ENCODE measurements at regions of chr15 and their contacts with region 1.

Region 1: GRCh38 chr15:28114721-28115622 is 15.9 kb upstream of the OCA2 start:
- DNase-seq: no peak
- ATAC-seq: no peak
- H3K4me3 ChIP-seq: no peak overlapping the region
- H3K27ac ChIP-seq: no peak overlapping the region
- H3K4me1 ChIP-seq: no peaks in the 10 kb centered on the region
- H3K27me3 ChIP-seq: no peaks in the 10 kb centered on the region
- CTCF ChIP-seq: no peak
- EP300 ChIP-seq: no peak
- POLR2A ChIP-seq: no peak
- RAD21 ChIP-seq: no peak

Region 2: GRCh38 chr15:27328608-27329007 is 786.4 kb before region 1 on chr15:
- CTCF ChIA-PET with region 1: no interaction called
- POLR2A ChIA-PET with region 1: no interaction called
- RAD21 ChIA-PET with region 1: no interaction called
- SMC1A ChIA-PET with region 1: no interaction called
- in situ Hi-C with region 1: no loop called
- intact Hi-C with region 1: no loop called
- DNase-seq: no peak
- ATAC-seq: no peak
- H3K4me3 ChIP-seq: no peak overlapping the region
- H3K27ac ChIP-seq: no peak overlapping the region
- H3K4me1 ChIP-seq: no peaks in the 10 kb centered on the region
- H3K27me3 ChIP-seq: no peaks in the 10 kb centered on the region
- CTCF ChIP-seq: no peak
- EP300 ChIP-seq: no peak
- POLR2A ChIP-seq: no peak
- RAD21 ChIP-seq: no peak

Region 3: DNA sequence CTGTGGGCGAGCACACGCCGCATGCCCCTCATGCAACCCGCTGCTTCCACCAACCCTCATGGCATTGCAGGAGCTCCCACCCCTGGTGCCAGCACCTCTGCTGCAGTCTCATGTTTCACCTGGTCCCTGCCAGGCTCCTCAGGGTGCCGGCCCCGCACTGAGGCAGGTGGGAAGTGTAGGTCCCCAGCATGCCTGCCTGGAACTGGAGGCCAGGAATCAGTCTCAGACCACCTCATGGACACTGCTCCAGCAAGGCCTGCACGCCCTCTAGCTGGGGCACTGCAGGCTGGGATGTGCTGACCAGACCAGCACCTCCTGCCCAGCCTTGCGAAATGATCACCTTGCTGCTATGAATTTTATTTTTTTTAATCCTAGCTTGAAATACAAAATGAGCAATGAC is 55.0 kb before region 1 on chr15:
- CTCF ChIA-PET with region 1: no interaction called
- POLR2A ChIA-PET with region 1: no interaction called
- RAD21 ChIA-PET with region 1: no interaction called
- SMC1A ChIA-PET with region 1: no interaction called
- in situ Hi-C with region 1: no loop called
- intact Hi-C with region 1: no loop called
- DNase-seq: no peak
- ATAC-seq: no peak
- H3K4me3 ChIP-seq: no peak overlapping the region
- H3K27ac ChIP-seq: no peak overlapping the region
- H3K4me1 ChIP-seq: no peaks in the 10 kb centered on the region
- H3K27me3 ChIP-seq: no peaks in the 10 kb centered on the region
- CTCF ChIP-seq: no peak
- EP300 ChIP-seq: no peak
- POLR2A ChIP-seq: no peak
- RAD21 ChIP-seq: no peak

Region 4: GRCh38 chr15:28080386-28080785 is 34.6 kb before region 1 on chr15:
- CTCF ChIA-PET with region 1: interaction called, 3 read pairs
- POLR2A ChIA-PET with region 1: no interaction called
- RAD21 ChIA-PET with region 1: no interaction called
- SMC1A ChIA-PET with region 1: no interaction called
- in situ Hi-C with region 1: loop called (anchors 5 kb)
- intact Hi-C with region 1: no loop called
- DNase-seq: no peak
- ATAC-seq: no peak
- H3K4me3 ChIP-seq: no peak overlapping the region
- H3K27ac ChIP-seq: no peak overlapping the region
- H3K4me1 ChIP-seq: no peaks in the 10 kb centered on the region
- H3K27me3 ChIP-seq: no peaks in the 10 kb centered on the region
- CTCF ChIP-seq: no peak
- EP300 ChIP-seq: no peak
- POLR2A ChIP-seq: no peak
- RAD21 ChIP-seq: no peak